ENCODE measurements at regions of chr11 and their contacts with region 1.

Region 1: DNA sequence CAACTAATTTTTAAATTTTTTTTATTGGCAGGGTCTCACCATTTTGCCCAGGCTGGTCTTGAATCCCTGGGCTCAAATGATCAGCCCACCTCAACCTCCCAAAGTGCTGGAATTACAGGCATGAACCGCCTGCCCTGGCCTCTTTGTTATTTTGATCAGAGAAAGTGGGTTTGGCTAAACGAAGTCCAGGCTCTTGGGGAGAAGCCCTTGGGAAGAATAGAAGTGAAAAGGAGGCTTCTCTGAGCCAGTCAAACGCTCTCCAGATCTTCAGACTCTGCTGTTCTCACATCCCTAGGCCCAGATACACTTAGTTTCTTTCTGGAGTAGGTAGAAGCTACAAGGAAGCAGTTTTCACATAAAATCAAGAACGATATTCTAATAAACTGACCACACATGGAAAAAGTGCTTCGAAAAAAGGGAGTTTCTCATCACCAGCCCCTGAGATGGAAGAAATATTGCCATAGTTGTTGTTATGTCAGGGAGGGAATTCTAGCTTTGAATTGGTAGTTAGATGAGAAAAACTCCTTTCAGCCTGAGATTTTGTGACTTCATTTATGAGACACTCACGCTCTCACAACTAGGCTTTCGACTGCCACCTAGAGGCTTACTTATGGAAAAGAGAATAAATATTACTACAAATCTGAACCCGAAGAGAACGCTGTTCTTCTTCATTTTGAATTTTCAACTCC is 41.7 kb upstream of the AQP11 start:
- DNase-seq: no peak
- ATAC-seq: peak; percentile 71

Region 2: DNA sequence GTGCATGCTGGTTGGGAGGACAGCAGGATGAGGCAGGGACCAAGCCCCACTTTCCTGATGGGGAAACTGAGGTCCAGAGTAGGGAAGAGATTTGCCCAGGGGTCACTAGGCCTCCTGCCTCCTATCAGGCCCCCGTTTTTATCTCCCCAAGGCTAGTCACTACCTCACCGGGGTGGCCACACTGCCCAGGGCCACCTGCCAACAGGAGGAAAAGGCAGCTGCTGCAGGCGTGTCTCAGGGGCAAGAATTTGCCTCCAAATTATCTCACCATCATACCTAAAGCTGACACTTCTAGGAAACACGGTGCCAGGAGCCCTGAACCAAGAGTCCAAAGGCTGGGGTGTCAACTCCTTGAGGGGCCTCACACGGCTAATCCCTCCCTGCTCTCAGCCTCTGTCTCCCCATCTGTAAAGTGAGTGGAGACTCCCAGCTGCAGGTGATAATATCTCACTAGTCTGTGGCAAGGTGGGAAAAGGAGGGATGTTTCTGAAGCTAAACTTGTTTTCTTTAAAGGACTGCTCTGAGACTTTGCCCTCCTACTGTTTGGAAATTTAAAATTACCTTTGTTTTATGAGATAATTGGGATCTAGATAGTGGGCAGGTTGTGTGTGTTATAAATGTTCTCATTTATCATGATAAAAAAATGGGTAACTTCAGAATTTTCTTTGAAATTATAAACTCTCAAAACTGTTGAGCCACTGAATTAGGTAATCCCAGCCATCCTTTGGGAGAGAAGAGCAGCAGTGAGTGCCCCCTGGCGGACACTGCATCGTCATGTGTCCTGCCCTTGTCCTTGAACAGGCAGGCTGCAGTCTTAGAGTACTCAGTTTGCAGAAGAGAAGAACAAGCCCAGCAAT is 360.0 kb before region 1 on chr11:
- intact Hi-C with region 1: loop called (anchors 10 kb)
- DNase-seq: peak; percentile 92
- ATAC-seq: peak; percentile 90